Prostate gland (tissue), 2 donors: ENCODE measurements at regions of chr2 and their contacts with region 1.

Region 1: DNA sequence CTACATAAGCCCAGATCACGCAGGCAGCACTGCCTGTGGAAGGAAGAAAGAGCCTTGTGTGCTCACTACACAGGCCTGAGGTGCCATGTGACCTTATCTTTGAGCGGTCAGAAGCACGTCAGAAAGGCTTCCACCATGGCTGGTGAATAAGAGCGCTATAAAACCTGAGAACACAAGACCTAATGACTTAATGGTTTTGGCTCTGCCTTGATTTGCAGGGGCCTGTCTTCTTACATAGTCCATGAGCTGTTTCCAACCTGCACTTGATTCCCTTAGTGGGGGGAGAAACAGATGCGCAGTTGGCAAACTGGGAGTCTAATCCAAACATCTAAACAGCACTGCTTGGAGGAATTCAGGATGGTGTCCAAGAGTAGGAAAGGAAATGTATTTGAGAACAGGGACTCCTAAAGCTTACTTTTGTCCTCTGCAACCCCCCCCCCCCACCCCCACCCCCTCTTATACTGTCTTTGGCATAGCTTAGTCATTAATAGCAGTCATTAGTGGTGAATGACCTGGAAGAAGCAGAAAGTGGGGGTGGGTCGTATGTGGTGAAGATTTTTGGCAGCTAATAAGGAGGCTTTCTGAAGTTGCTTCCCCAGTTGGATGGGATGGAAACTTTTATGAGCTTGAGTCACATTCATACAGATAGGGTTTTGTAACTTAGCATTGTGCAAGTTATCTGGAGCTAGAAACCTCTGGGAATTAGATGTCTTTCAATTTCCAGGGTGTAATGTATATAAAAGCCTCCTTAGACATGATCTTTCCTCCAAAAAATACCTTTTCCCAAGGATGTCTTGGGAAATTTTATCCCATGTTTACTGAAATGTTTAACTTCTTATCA is 454.1 kb downstream of the MEIS1 start:
- DNase-seq: peak; percentile 12
- H3K4me3 ChIP-seq: no peak overlapping the region
- H3K27ac ChIP-seq: peak overlapping the region; percentile 41 to 50
- H3K4me1 ChIP-seq: no peaks in the 10 kb centered on the region
- H3K27me3 ChIP-seq: no peaks in the 10 kb centered on the region
- CTCF ChIP-seq: no peak
- POLR2A ChIP-seq: no peak

Region 2: DNA sequence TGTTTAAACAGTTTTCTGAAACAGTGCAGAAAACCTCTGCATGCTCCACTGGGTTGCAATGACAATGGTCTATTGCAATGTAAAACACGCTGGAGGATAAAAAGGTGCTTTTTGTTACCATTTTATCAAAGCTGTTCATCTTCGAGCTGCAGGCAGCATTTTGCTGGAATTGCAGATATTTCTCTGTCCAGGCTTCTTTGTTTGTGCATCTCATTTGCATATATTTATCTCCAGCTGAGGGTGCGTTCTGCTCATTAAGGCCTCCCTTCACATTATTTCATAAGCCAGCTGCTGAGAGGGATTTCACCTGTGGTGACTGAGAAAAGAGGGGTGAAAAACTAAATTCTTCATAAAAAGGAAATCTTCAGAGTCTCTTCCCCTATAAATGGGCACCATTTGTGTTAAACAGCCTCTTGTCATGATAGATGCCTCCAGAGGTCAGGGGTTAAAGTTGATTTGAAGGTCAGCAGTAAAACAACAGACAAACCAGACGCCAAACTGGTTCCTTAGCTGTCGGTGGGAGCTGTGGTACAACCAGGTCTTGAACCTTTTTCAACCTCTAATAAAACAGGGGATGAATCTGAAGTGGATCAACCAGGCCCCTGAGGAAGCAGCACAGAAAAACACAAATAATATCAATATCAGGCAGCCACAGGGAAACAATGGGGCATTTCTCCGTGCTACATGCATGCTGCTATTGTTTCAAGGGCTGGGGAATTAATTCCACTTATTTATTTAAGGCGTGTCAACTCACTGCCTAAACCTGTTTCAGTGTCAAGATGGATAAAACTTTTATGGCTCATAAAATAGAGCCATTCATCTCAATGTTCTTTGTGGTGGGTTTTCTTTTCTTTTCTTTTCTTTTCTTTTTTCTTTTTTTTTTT is 189.0 kb before region 1 on chr2:
- intact Hi-C with region 1: loop called (anchors 5 kb)
- DNase-seq: no peak
- H3K4me3 ChIP-seq: no peak overlapping the region
- H3K27ac ChIP-seq: peak overlapping the region; percentile 45
- H3K4me1 ChIP-seq: peaks cover 9% of the 10 kb centered on the region
- H3K27me3 ChIP-seq: no peaks in the 10 kb centered on the region
- CTCF ChIP-seq: no peak
- POLR2A ChIP-seq: no peak

Region 3: GRCh38 chr2:67215214-67216055 is 326.4 kb after region 1 on chr2:
- intact Hi-C with region 1: loop called (anchors 10 kb)
- DNase-seq: no peak
- H3K4me3 ChIP-seq: no peak overlapping the region
- H3K27ac ChIP-seq: no peak overlapping the region
- H3K4me1 ChIP-seq: no peaks in the 10 kb centered on the region
- H3K27me3 ChIP-seq: no peaks in the 10 kb centered on the region
- CTCF ChIP-seq: peak in 3 of 4 experiments; percentile 25 to 32 (median 30)
- POLR2A ChIP-seq: no peak

Region 4: GRCh38 chr2:67277450-67277849 is 388.4 kb after region 1 on chr2:
- intact Hi-C with region 1: no loop called
- DNase-seq: peak; percentile 6
- H3K4me3 ChIP-seq: no peak overlapping the region
- H3K27ac ChIP-seq: no peak overlapping the region
- H3K4me1 ChIP-seq: no peaks in the 10 kb centered on the region
- H3K27me3 ChIP-seq: no peaks in the 10 kb centered on the region
- CTCF ChIP-seq: no peak
- POLR2A ChIP-seq: no peak

Region 5: DNA sequence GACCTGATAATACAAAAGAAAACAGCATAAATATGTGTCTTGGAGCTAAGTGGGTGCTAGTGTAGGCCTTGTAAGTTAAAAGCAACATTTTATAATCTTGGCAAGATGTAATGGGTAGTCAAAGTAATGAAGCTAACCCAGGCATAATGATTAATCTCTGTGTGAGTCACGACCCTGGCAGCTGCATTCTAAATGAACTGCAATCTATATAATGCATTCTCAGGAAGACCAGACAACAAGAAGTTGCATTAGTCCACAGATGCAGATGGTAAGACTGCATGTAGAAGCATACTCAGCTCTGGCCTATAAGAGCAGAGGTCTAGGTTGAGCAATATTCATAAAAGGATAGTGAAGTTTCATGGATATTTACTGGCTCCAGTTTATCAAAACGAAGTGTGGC is 422.5 kb after region 1 on chr2:
- intact Hi-C with region 1: no loop called
- DNase-seq: no peak
- H3K4me3 ChIP-seq: no peak overlapping the region
- H3K27ac ChIP-seq: no peak overlapping the region
- H3K4me1 ChIP-seq: no peaks in the 10 kb centered on the region
- H3K27me3 ChIP-seq: no peaks in the 10 kb centered on the region
- CTCF ChIP-seq: no peak
- POLR2A ChIP-seq: no peak